Left cardiac atrium (tissue), 4 donors: ENCODE measurements at regions of chr11 and their contacts with region 1.

Region 1: DNA sequence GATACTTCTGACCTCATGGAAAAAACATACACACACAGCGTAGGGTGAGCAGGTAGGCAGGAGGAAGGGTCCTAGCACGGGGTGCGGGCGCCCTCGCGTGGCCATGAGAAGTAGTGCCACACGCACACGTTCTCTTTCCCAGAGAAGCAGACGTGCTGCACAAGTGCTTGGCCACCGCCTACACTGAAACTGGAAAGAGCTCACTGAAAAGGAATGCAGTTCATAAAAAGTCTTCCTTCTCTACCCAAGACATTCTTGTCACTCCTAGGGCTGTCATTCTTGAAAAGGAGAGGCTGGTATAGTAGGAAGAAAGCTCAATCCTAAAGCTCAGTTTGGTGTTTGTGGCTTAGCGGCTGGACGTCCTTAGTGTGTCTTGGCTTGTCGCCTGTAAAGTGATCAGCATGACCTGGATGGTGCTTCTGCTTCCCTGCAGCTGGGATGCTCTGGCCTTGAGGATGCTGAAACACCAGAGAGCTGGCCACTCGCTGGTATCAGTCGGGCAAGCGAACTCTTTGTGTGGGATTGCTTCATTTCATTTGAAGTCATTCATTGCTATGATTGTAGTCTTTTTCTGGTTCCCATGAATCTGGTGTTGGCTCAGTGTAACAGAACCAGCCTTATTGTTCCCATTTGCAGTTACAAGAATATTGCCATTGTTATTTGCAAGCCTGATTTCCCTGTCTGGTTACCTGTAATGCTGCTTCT is 303.8 kb downstream of the NTM start:
- DNase-seq: peak; percentile 68
- ATAC-seq: peak; percentile 84 to 93

Region 2: GRCh38 chr11:131408025-131408640 is 266.1 kb before region 1 on chr11:
- intact Hi-C with region 1: loop called in 1 of 2 experiments (anchors 10 kb)
- DNase-seq: no peak
- ATAC-seq: peak; percentile 61 to 90

Region 3: DNA sequence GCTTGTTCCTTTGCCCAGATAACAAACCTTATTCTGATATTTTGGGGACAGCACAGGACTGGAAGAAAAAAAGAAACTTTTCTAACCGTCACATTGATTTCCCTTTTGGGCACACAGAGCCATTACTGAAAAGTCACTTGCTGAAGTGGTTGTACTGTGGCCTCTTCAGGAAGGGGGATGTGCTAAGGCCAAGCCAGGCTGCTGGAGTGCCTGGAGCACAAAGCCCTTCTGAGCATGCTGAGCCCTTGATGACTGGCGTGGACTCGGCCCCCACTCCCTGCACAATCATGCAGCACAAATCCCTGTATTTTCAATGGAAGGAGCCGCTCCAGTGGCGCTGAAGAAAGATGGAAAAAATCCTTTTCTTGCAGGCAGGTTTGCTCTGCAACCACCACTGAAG is 139.6 kb before region 1 on chr11:
- intact Hi-C with region 1: loop called in 1 of 2 experiments (anchors 10 kb)
- DNase-seq: no peak
- ATAC-seq: no peak

Region 4: GRCh38 chr11:131579932-131580387 is 94.2 kb before region 1 on chr11:
- intact Hi-C with region 1: loop called in 1 of 2 experiments (anchors 5 kb)
- DNase-seq: no peak
- ATAC-seq: no peak